Activated naive CD4-positive, alpha-beta T cell treated with anti-CD3 and anti-CD28 coated beads for 36 hours (primary cell): ENCODE measurements at regions of chr17 and their contacts with region 1.

Region 1: GRCh38 chr17:48830840-48831548 is at the start of gene CALCOCO2:
- DNase-seq: peak; percentile 92
- H3K4me3 Mint-ChIP-seq: peak within 1 kb of the TSS; percentile 95
- H3K27ac Mint-ChIP-seq: peak within 1 kb of the TSS; percentile 93
- H3K4me1 Mint-ChIP-seq: peaks cover 52% of the 10 kb centered on the region
- H3K27me3 Mint-ChIP-seq: no peaks in the 10 kb centered on the region
- total RNA-seq, gene CALCOCO2: 78.2 to 80.3 TPM

Region 2: GRCh38 chr17:48841395-48841831 is 10.4 kb after region 1 on chr17:
- CTCF ChIA-PET with region 1: interaction called, 3 read pairs
- intact Hi-C with region 1: loop called (anchors 1 kb)
- DNase-seq: peak; percentile 66
- H3K4me3 Mint-ChIP-seq: no peak overlapping the region
- H3K27ac Mint-ChIP-seq: peak overlapping the region; percentile 18
- H3K4me1 Mint-ChIP-seq: peaks cover 59% of the 10 kb centered on the region
- H3K27me3 Mint-ChIP-seq: no peaks in the 10 kb centered on the region

Region 3: DNA sequence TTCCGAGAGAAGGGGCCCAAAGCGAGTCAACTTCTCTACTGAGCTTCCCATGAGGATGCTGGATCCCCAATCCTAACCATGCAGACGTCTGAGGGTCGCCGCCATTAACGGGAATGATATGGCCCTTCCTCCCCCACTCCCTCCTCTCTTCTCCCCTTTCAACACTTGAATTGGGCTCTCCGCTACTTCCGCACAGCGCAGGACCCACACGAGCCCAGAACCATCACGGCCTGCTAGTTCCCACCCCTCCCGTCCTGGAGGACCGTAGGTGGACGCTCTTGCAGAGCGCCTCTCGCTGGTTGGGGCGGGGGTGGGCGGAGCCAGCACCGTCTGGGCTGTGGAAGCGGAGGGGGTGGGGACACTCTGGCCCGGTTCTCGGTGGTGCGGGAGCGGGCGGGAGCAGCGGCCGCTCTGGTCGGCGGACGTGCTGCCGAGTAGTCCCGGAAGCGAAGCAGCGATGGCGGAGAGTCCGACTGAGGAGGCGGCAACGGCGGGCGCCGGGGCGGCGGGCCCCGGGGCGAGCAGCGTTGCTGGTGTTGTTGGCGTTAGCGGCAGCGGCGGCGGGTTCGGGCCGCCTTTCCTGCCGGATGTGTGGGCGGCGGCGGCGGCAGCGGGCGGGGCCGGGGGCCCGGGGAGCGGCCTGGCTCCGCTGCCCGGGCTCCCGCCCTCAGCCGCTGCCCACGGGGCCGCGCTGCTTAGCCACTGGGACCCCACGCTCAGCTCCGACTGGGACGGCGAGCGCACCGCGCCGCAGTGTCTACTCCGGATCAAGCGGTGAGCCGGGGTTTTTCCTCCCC is 77.3 kb after region 1 on chr17 and contains the start of gene UBE2Z:
- CTCF ChIA-PET with region 1: no interaction called
- intact Hi-C with region 1: loop called (anchors 2 kb)
- DNase-seq: peak; percentile 93
- H3K4me3 Mint-ChIP-seq: peak within 1 kb of the TSS; percentile 88
- H3K27ac Mint-ChIP-seq: peak within 1 kb of the TSS; percentile 96
- H3K4me1 Mint-ChIP-seq: peaks cover 44% of the 10 kb centered on the region
- H3K27me3 Mint-ChIP-seq: no peaks in the 10 kb centered on the region
- total RNA-seq, gene UBE2Z: 76.1 to 76.9 TPM

Region 4: GRCh38 chr17:49227436-49228261 is 396.7 kb after region 1 on chr17:
- CTCF ChIA-PET with region 1: no interaction called
- intact Hi-C with region 1: no loop called
- DNase-seq: peak; percentile 91
- H3K4me3 Mint-ChIP-seq: no peak overlapping the region
- H3K27ac Mint-ChIP-seq: no peak overlapping the region
- H3K4me1 Mint-ChIP-seq: peaks cover 23% of the 10 kb centered on the region
- H3K27me3 Mint-ChIP-seq: peaks cover 26% of the 10 kb centered on the region